CD4-positive, alpha-beta T cell (primary cell): ENCODE measurements at regions of chr14 and their contacts with region 1.

Region 1: GRCh38 chr14:65287264-65288131 is 125.0 kb upstream of the FUT8 start:
- DNase-seq: peak; percentile 21 to 83 (median 34)
- ATAC-seq: peak; percentile 86
- H3K4me3 ChIP-seq: peak overlapping the region; percentile 24
- H3K4me3 Mint-ChIP-seq: peak overlapping the region; percentile 85
- H3K27ac ChIP-seq: peak overlapping the region; percentile 72 to 73
- H3K27ac Mint-ChIP-seq: peak overlapping the region; percentile 95
- H3K4me1 ChIP-seq: peaks cover 68% of the 10 kb centered on the region
- H3K4me1 Mint-ChIP-seq: peaks cover 70% of the 10 kb centered on the region
- H3K27me3 ChIP-seq: no peaks in the 10 kb centered on the region
- H3K27me3 Mint-ChIP-seq: no peaks in the 10 kb centered on the region
- CTCF ChIP-seq: no peak

Region 2: GRCh38 chr14:65302571-65303189 is 15.2 kb after region 1 on chr14:
- CTCF ChIA-PET with region 1: no interaction called
- POLR2A ChIA-PET with region 1: interaction called, 10 read pairs
- intact Hi-C with region 1: no loop called
- DNase-seq: no peak
- ATAC-seq: peak; percentile 27
- H3K4me3 ChIP-seq: no peak overlapping the region
- H3K4me3 Mint-ChIP-seq: no peak overlapping the region
- H3K27ac ChIP-seq: no peak overlapping the region
- H3K27ac Mint-ChIP-seq: peak overlapping the region; percentile 56
- H3K4me1 ChIP-seq: peaks cover 44% of the 10 kb centered on the region
- H3K4me1 Mint-ChIP-seq: peaks cover 76% of the 10 kb centered on the region
- H3K27me3 ChIP-seq: no peaks in the 10 kb centered on the region
- H3K27me3 Mint-ChIP-seq: no peaks in the 10 kb centered on the region
- CTCF ChIP-seq: no peak